ENCODE measurements at regions of chr11 and their contacts with region 1.

Region 1: DNA sequence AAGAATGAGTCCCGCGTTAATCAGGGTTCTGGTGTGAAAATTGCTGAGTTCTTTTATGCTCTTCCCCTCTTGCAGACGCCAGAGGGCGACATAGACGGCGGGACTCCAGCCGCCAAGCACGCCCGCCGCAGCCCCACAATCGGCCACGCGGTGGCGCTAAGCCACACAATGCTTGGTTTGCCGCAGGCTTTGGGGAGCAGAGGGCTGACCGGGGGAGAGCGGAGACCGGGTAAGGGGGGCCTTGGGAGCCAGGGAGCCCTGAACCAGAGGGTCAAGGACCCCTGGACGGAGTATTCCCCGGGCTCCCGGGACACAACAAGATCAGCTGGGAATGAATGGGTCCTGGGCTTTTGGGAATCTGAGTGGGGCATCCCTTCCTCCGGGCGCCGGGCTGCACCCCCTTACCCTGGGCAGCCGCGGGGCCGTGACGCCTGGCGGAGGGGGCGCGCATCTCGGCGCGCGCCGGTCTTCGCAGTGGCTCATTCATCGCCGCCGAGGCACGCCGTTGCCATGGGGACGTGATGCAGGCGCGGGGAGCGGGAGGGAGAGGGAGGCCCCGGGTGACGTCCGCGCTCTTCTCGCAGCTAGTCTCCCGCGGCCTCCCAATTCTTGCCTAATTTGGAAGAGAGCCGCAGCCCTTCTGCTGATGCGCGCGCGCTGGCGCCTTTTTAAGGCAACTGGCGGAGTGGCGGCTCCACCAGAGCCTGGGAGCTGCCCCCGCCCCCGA is 12.2 kb upstream of the NPAS4 start:
- DNase-seq: peak; percentile 96 to 97
- ATAC-seq: peak; percentile 93 to 96 (median 94)
- H3K4me3 ChIP-seq: no peak overlapping the region
- H3K4me3 Mint-ChIP-seq: peak overlapping the region; percentile 87
- H3K27ac ChIP-seq: no peak overlapping the region
- H3K27ac Mint-ChIP-seq: peak overlapping the region; percentile 18 to 66
- H3K4me1 ChIP-seq: peaks cover 6% of the 10 kb centered on the region
- H3K4me1 Mint-ChIP-seq: peaks cover 5 to 6% of the 10 kb centered on the region in 2 donors
- H3K27me3 ChIP-seq: no peaks in the 10 kb centered on the region
- H3K27me3 Mint-ChIP-seq: peaks cover 34 to 41% of the 10 kb centered on the region in 2 donors
- CTCF ChIP-seq: peak; percentile 100

Region 2: DNA sequence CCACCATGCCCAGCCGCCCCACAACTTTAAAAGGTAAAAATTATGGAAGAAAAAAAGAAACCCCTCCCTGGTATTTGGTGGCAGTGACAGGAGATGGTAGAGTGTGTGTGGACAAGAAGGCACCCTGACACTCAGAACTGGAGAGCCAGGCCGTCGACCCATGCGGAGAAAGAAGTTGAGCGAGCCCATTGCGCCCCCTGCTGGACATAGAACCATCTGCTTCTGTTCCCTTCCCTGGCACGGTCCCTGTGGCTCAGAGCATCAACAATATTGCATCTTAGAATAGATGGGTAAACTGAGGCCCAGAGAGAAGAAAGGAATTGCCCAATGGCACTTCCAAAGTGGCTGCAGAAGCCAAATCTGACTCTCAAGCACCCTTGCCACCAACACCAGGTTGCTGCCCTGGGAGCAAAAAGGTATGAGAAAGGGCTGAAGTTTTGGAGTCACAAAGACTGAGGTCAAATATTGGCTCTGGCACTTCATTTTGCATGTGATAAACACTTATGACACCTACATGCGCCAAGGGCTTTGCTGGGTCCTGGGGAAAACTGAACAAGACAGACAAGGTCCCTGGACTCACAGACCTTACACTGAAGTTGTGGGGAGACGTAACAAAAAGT is 21.4 kb after region 1 on chr11:
- intact Hi-C with region 1: loop called (anchors 1 kb)
- DNase-seq: peak; percentile 62 to 86
- ATAC-seq: peak; percentile 63 to 76 (median 73)
- H3K4me3 ChIP-seq: no peak overlapping the region
- H3K4me3 Mint-ChIP-seq: no peak overlapping the region
- H3K27ac ChIP-seq: no peak overlapping the region
- H3K27ac Mint-ChIP-seq: no peak overlapping the region
- H3K4me1 ChIP-seq: no peaks in the 10 kb centered on the region
- H3K4me1 Mint-ChIP-seq: peaks cover 0 to 7% of the 10 kb centered on the region in 2 donors
- H3K27me3 ChIP-seq: no peaks in the 10 kb centered on the region
- H3K27me3 Mint-ChIP-seq: peaks cover 0 to 3% of the 10 kb centered on the region in 2 donors
- CTCF ChIP-seq: peak; percentile 78

Region 3: DNA sequence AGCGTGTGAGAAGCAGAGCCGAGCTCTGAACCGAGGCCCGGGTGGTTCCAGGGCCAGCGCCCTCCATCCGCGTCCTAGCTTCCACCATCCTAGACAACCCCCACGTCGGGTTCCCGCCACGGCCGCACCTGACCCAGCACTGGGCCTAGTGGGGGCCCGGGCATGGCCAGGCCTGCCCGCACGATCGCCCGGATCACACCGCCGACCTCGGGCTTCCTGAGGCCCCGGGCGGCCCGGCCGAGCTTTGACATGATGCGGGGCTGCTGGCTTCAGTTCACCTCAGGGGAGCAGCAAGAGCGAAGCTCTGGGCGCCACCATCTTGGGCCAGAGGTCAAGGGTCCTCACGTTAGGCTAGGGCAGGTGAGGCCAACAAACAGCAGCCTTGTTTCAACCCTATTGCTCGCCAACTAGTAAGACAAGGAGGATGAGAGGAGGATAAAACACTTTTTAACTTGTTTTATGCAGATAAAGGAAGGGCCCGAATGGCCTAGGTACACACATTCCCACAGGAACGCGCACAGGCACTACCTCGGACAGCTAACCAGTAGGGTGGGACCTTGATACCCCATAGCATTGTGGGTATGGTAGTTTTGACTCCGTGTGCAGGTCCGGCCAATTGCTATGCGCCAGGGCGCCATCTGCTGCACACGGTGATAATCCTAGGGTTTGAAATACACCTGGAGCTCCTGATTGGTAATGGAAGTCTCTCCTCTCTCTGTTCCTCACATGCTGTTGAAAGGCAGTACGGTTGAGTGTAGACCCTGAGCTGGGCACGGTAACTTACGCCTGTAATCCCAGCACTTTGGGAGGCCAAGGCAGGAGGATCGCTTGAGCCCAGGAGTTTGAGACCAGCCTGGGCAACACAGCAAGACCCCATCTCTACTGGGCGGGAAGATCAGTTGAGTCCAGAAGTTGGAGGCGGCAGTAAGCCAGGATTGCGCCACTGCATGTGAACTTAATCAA is 30.1 kb after region 1 on chr11 and contains the start of gene MRPL11:
- intact Hi-C with region 1: loop called (anchors 2 kb)
- DNase-seq: peak; percentile 84 to 96
- ATAC-seq: peak; percentile 97 to 100 (median 98)
- H3K4me3 ChIP-seq: peak within 1 kb of the TSS; percentile 64
- H3K4me3 Mint-ChIP-seq: peak within 1 kb of the TSS; percentile 87
- H3K27ac ChIP-seq: peak within 1 kb of the TSS; percentile 89
- H3K27ac Mint-ChIP-seq: peak within 1 kb of the TSS; percentile 89 to 95
- H3K4me1 ChIP-seq: peaks cover 10% of the 10 kb centered on the region
- H3K4me1 Mint-ChIP-seq: peaks cover 16 to 17% of the 10 kb centered on the region in 2 donors
- H3K27me3 ChIP-seq: no peaks in the 10 kb centered on the region
- H3K27me3 Mint-ChIP-seq: peaks cover 0 to 11% of the 10 kb centered on the region in 2 donors
- CTCF ChIP-seq: peak; percentile 75
- total RNA-seq, gene MRPL11: 20.7 to 24.2 (median 23.9) TPM

Region 4: DNA sequence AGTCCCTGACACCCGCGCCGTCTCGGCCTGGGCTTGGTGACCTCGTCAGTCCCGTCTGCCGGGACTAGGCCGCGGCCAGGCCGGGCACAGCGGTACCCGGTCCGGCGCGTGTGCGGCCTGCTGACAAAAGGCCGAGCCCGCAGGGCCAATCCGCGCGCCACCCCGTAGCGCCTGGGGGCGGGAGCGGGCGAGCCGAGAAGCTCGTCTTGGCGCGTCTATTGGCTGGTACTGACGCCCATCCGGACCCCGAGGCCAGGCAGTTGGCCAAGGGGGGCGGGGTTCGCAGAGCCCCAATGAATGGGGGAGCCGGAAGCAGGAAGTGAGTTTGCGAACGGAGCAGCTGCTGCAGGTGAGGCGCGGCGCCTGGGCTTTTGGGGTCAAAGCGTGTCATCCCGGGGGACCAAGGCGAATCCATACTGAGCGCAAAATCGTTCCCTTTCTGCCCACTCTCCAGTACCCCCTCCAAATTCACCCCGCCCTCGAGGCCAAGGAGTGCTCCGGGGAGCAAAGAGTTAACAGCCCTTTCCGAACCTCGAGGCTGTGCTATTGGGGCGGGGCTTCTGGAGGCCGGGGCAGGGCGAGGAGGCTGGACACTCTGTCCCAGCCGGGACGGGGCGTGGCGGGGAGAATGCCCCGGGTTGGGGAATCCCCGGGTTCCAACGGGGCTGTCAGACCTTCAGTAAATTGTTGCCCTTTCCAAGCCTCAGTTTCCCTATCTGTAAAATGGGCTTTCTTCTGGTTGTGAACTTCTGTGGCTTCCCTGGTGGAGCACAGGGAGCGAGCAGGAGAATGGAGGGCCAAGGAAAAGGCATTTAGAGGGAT is 71.7 kb after region 1 on chr11 and contains the start of gene DPP3:
- intact Hi-C with region 1: loop called (anchors 1 kb)
- DNase-seq: peak; percentile 94 to 96
- ATAC-seq: peak; percentile 98 to 99 (median 99)
- H3K4me3 ChIP-seq: peak within 1 kb of the TSS; percentile 89
- H3K4me3 Mint-ChIP-seq: peak within 1 kb of the TSS; percentile 92
- H3K27ac ChIP-seq: peak within 1 kb of the TSS; percentile 82
- H3K27ac Mint-ChIP-seq: peak within 1 kb of the TSS; percentile 87 to 91
- H3K4me1 ChIP-seq: peaks cover 21% of the 10 kb centered on the region
- H3K4me1 Mint-ChIP-seq: peaks cover 13 to 42% of the 10 kb centered on the region in 2 donors
- H3K27me3 ChIP-seq: no peaks in the 10 kb centered on the region
- H3K27me3 Mint-ChIP-seq: no peaks in the 10 kb centered on the region
- CTCF ChIP-seq: no peak
- total RNA-seq, gene DPP3: 37.4 to 42.9 (median 38.6) TPM

Region 5: GRCh38 chr11:66835768-66836405 is 427.2 kb after region 1 on chr11:
- intact Hi-C with region 1: loop called (anchors 1 kb)
- DNase-seq: no peak
- ATAC-seq: no peak
- H3K4me3 ChIP-seq: no peak overlapping the region
- H3K4me3 Mint-ChIP-seq: no peak overlapping the region
- H3K27ac ChIP-seq: no peak overlapping the region
- H3K27ac Mint-ChIP-seq: peak overlapping the region in 1 of 2 donors; percentile 29
- H3K4me1 ChIP-seq: peaks cover 8% of the 10 kb centered on the region
- H3K4me1 Mint-ChIP-seq: peaks cover 23 to 27% of the 10 kb centered on the region in 2 donors
- H3K27me3 ChIP-seq: no peaks in the 10 kb centered on the region
- H3K27me3 Mint-ChIP-seq: no peaks in the 10 kb centered on the region
- CTCF ChIP-seq: no peak

Measured in natural killer cell (primary cell).